ENCODE measurements at regions of chr12 and their contacts with region 1.

Region 1: DNA sequence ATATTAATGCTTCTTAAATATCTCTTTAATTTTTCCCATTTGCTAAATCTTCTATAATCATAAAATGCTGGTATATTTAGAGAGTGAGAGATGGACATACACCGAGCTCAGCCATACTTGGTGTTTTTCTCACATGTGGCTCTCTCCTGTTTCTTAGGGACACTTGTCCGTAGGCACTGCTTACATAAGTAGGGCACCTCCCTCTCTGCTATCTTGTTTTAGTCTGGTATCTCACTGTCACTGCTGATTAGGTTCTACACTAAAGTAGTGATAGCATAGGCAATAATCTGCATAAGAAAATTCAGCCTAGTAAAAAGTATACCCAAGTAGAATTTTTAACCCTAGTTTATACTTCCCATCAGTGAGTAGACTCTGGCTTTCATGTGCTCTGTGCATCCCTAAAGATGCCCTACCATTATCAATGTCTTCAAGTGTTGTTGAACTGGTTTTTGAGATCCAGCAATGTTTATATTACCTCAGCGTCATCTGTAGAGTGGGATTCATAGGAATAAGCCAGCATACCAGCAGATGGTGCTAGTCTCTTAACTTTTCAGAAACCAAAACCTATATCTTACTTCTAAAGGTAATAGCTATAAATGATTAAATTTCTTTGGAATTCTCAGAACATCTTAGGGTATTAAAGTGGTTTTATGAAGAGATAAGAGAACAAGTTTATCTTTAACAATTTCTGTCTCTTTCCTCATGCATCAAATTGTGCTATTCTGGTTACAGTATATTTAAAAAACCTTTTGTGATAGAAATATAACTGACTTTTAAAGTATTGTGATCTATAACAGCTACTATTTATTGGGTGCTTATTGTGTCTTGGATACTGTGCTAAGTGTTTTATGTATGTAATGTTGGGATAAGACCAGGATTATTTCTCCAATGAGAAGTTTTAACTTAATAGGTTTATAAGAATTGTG is 32.9 kb downstream of the ARID2 start:
- DNase-seq: no peak
- H3K4me3 Mint-ChIP-seq: no peak overlapping the region
- H3K27ac Mint-ChIP-seq: no peak overlapping the region
- H3K4me1 Mint-ChIP-seq: peaks cover 35% of the 10 kb centered on the region
- H3K27me3 Mint-ChIP-seq: no peaks in the 10 kb centered on the region

Region 2: GRCh38 chr12:45349911-45350310 is 412.5 kb before region 1 on chr12:
- CTCF ChIA-PET with region 1: no interaction called
- POLR2A ChIA-PET with region 1: no interaction called
- intact Hi-C with region 1: no loop called
- DNase-seq: no peak
- H3K4me3 Mint-ChIP-seq: no peak overlapping the region
- H3K27ac Mint-ChIP-seq: no peak overlapping the region
- H3K4me1 Mint-ChIP-seq: peaks cover 10% of the 10 kb centered on the region
- H3K27me3 Mint-ChIP-seq: no peaks in the 10 kb centered on the region

Region 3: GRCh38 chr12:45775964-45776363 is 13.5 kb after region 1 on chr12:
- CTCF ChIA-PET with region 1: interaction called, 14 read pairs
- POLR2A ChIA-PET with region 1: no interaction called
- intact Hi-C with region 1: no loop called
- DNase-seq: no peak
- H3K4me3 Mint-ChIP-seq: no peak overlapping the region
- H3K27ac Mint-ChIP-seq: no peak overlapping the region
- H3K4me1 Mint-ChIP-seq: peaks cover 20% of the 10 kb centered on the region
- H3K27me3 Mint-ChIP-seq: no peaks in the 10 kb centered on the region

Measured in activated CD4-positive, alpha-beta memory T cell treated with anti-CD3 and anti-CD28 coated beads for 36 hours (primary cell).